ENCODE measurements at regions of chr11 and their contacts with region 1.

Region 1: GRCh38 chr11:777288-778255 is at the start of gene GATD1:
- DNase-seq: peak; percentile 51 to 89
- H3K4me3 ChIP-seq: peak within 1 kb of the TSS; percentile 69
- H3K27ac ChIP-seq: no peak within 1 kb of the TSS
- H3K4me1 ChIP-seq: peaks cover 13% of the 10 kb centered on the region
- H3K27me3 ChIP-seq: no peaks in the 10 kb centered on the region
- CTCF ChIP-seq: no peak
- total RNA-seq, gene GATD1: 52.7 and 61.9 TPM in 2 replicates

Region 2: DNA sequence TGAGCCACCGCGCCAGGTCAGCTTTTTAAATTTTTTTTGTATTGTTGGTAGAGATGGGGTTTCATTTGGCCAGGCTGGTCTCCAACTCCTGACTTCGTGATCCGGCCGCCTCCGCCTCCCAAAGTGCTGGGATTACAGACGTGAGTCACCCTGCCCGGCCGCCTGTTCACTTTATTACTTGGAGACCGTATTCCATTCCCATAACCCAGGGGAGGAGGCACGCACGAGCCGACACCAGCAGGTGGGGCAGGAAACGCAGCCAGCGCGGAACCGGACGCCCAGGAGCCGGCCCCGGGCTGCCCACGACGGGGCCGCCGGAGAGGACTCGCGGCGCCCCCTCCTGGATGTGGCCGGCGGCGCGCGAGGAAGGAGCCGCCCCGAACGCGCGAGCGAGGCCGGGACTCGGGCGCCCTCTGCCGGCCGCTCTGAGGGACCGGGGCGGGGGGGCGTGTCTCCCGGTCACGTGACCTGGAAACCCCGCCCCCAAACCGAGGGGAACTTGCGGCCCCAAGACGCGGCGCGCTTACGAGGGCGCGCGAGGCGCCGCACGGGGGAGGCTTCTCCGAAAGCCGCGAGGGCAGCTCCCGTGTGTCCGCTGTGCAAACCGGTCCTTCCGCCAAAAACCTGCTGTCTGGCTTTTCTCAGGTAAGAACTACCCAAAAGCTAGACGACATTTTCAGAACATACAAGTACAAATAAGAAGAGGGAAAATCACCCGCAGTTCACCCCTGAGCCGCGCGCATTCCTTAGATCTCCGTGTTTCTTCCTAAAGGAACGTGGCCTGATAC is 258.9 kb before region 1 on chr11:
- CTCF ChIA-PET with region 1: interaction called, 11 read pairs
- POLR2A ChIA-PET with region 1: no interaction called
- intact Hi-C with region 1: no loop called
- DNase-seq: peak; percentile 88 to 92
- H3K4me3 ChIP-seq: peak overlapping the region; percentile 32; the same call in 1 of the 2 replicates
- H3K27ac ChIP-seq: peak overlapping the region; percentile 71
- H3K4me1 ChIP-seq: no peaks in the 10 kb centered on the region
- H3K27me3 ChIP-seq: no peaks in the 10 kb centered on the region
- CTCF ChIP-seq: peak; percentile 73

Region 3: GRCh38 chr11:655036-655726 is 122.4 kb before region 1 on chr11:
- CTCF ChIA-PET with region 1: no interaction called
- POLR2A ChIA-PET with region 1: interaction called, 14 read pairs
- intact Hi-C with region 1: no loop called
- DNase-seq: no peak
- H3K4me3 ChIP-seq: no peak overlapping the region
- H3K27ac ChIP-seq: no peak overlapping the region
- H3K4me1 ChIP-seq: no peaks in the 10 kb centered on the region
- H3K27me3 ChIP-seq: no peaks in the 10 kb centered on the region
- CTCF ChIP-seq: no peak

Region 4: DNA sequence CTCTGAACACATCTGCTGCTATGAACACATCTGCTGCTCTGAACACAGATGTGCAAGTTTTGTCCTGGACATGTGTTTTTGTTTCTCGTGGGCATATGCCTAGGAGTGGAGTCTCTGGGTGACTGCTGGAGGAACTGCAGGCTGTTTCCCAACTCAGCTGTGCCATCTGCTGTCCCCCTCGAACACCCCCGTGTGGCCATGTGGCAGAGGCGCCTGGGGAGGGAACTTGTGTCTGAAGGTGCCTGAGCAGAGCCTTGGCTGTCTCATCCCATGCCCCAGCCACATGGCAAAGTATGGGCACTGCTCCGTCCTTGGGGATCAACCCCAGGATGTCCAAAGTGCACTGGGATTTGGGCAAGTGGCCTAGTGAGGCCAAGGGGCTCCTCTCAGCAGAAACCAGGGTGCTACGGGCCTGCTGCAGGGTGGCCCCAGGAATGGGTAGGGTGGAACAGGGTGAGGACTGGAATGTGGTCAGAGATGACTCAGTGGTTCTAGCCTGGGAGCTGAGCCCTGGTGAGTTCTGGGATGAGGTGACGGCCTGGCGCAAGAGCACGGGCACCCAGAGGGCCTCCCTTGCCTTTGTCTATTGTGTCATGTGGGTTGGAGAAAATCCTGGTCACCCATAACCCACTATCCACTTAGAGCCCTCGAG is 15.0 kb before region 1 on chr11:
- CTCF ChIA-PET with region 1: interaction called, 8 read pairs
- POLR2A ChIA-PET with region 1: interaction called, 17 read pairs
- intact Hi-C with region 1: no loop called
- DNase-seq: peak; percentile 83 to 93
- H3K4me3 ChIP-seq: peak overlapping the region; percentile 28; the same call in 1 of the 2 replicates
- H3K27ac ChIP-seq: peak overlapping the region; percentile 90
- H3K4me1 ChIP-seq: peaks cover 30% of the 10 kb centered on the region
- H3K27me3 ChIP-seq: no peaks in the 10 kb centered on the region
- CTCF ChIP-seq: peak; percentile 50; the same call in 1 of the 2 replicates

Region 5: DNA sequence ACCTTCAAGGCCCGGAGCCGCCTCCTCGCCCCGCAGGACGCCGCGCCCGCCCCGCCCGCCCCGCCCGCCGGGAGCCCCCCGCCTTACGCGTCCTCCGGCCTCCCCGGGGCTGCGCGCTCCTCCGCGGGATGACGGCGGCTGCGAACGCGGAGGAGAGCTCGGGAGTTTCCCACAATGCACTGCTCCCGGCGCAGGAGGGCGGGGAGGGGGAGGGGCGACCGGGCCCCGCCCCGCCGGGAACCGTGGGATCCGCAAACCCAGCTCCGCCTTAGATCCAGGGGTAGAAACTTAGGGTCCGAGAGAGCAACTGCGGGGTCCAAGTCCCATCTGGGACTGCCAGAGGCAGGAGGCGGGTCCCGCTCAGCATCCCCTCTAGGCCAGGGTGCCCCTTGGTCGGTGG is 12.4 kb after region 1 on chr11 and contains the start of gene CEND1:
- CTCF ChIA-PET with region 1: no interaction called
- POLR2A ChIA-PET with region 1: interaction called, 16 read pairs
- intact Hi-C with region 1: no loop called
- DNase-seq: no peak
- H3K4me3 ChIP-seq: no peak within 1 kb of the TSS
- H3K27ac ChIP-seq: no peak within 1 kb of the TSS
- H3K4me1 ChIP-seq: no peaks in the 10 kb centered on the region
- H3K27me3 ChIP-seq: no peaks in the 10 kb centered on the region
- CTCF ChIP-seq: no peak
- total RNA-seq, gene CEND1: not detected in 2 replicates

Region 6: DNA sequence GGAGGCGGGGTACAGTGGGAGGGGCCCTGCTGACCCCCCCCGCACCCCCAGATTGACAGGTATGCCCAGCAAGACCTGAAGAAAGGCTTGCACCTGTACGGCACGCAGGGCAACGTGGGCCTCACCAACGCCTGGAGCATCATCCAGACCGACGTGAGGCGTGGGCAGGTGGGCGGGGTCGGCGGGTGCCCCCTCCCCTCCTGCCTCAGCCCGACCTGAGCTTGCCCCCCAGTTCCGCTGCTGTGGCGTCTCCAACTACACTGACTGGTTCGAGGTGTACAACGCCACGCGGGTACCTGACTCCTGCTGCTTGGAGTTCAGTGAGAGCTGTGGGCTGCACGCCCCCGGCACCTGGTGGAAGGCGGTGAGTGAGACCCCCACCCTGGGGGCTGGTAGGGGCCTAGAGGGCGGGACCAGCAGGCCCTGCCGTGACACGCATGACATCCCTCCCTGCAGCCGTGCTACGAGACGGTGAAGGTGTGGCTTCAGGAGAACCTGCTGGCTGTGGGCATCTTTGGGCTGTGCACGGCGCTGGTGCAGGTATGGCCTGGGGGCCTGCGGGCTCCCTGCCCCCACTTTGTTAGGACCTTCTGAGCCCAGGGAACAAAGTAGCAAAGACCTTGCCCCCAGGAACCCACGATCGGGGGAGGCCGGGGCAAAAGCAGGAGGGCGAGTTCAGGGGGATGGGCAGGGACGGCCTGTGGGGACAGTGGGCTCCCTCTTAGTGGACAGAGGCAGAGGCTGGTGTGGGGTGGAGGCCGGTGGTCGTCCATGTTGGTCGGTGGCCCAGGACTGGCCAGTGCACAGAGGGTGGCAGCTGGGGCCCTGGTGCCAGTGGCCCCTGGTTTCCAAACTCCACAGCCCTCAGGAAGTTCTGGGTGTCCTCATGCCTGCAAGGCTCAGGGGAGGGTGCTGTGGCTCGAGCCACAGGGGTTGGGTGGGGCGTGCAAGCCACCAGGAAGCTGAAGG is 88.2 kb after region 1 on chr11:
- CTCF ChIA-PET with region 1: no interaction called
- POLR2A ChIA-PET with region 1: interaction called, 27 read pairs
- intact Hi-C with region 1: no loop called
- DNase-seq: no peak
- H3K4me3 ChIP-seq: no peak overlapping the region
- H3K27ac ChIP-seq: no peak overlapping the region
- H3K4me1 ChIP-seq: no peaks in the 10 kb centered on the region
- H3K27me3 ChIP-seq: no peaks in the 10 kb centered on the region
- CTCF ChIP-seq: no peak